ENCODE measurements at regions of chr15 and their contacts with region 1.

Region 1: GRCh38 chr15:89129123-89129815 is 41.0 kb downstream of the ABHD2 start:
- DNase-seq: no peak
- ATAC-seq: peak; percentile 95
- H3K4me3 ChIP-seq: no peak overlapping the region
- H3K27ac ChIP-seq: no peak overlapping the region
- H3K4me1 ChIP-seq: no peaks in the 10 kb centered on the region
- H3K27me3 ChIP-seq: no peaks in the 10 kb centered on the region
- CTCF ChIP-seq: peak; percentile 68 to 82 (median 81)
- EP300 ChIP-seq: no peak
- POLR2A ChIP-seq: no peak
- RAD21 ChIP-seq: peak; percentile 70

Region 2: DNA sequence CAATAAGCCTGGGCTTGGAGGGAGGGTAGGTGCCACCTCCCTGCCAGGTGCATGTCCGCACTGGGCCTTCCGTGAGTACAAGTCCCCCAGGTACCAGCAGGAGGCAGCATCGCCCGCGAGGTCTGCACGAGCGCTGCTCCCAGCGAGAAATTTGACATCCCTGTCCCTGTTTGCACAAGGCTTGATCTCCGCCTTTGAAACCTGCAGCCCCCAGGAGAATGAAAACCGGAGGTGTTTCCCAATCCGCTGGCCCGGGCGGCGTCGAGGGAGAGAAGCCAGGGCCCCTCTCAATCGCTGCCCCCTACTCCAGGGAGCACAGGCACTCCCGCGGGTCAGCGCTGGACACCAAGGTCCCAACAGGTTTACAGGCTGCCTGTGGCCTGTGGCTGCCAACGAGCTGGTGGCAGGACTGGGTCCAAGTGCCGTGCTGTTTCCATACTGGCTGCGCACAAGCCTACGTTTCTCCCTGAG is 234.9 kb before region 1 on chr15:
- CTCF ChIA-PET with region 1: no interaction called
- POLR2A ChIA-PET with region 1: no interaction called
- RAD21 ChIA-PET with region 1: no interaction called
- SMC1A ChIA-PET with region 1: no interaction called
- in situ Hi-C with region 1: no loop called
- intact Hi-C with region 1: loop called (anchors 1 kb)
- DNase-seq: no peak
- ATAC-seq: peak; percentile 75
- H3K4me3 ChIP-seq: peak overlapping the region; percentile 38; the same call in 1 of the 2 replicates
- H3K27ac ChIP-seq: no peak overlapping the region
- H3K4me1 ChIP-seq: peaks cover 3% of the 10 kb centered on the region
- H3K27me3 ChIP-seq: peaks cover 0 to 5% of the 10 kb centered on the region in 2 experiments; a peak in 2 of 4 replicates
- CTCF ChIP-seq: peak; percentile 73 to 92 (median 82)
- EP300 ChIP-seq: no peak
- POLR2A ChIP-seq: no peak
- RAD21 ChIP-seq: peak; percentile 48

Region 3: GRCh38 chr15:89075846-89076245 is 53.4 kb before region 1 on chr15:
- CTCF ChIA-PET with region 1: interaction called, 11 read pairs
- POLR2A ChIA-PET with region 1: no interaction called
- RAD21 ChIA-PET with region 1: interaction called, 5 read pairs
- SMC1A ChIA-PET with region 1: interaction called, 3 read pairs
- in situ Hi-C with region 1: no loop called
- intact Hi-C with region 1: no loop called
- DNase-seq: no peak
- ATAC-seq: no peak
- H3K4me3 ChIP-seq: no peak overlapping the region
- H3K27ac ChIP-seq: no peak overlapping the region
- H3K4me1 ChIP-seq: no peaks in the 10 kb centered on the region
- H3K27me3 ChIP-seq: no peaks in the 10 kb centered on the region
- CTCF ChIP-seq: no peak
- EP300 ChIP-seq: no peak
- POLR2A ChIP-seq: no peak
- RAD21 ChIP-seq: no peak

Region 4: GRCh38 chr15:89101302-89102191 is 27.7 kb before region 1 on chr15:
- CTCF ChIA-PET with region 1: interaction called, 22 read pairs
- POLR2A ChIA-PET with region 1: no interaction called
- RAD21 ChIA-PET with region 1: interaction called, 20 read pairs
- SMC1A ChIA-PET with region 1: interaction called, 45 read pairs
- in situ Hi-C with region 1: no loop called
- intact Hi-C with region 1: no loop called
- DNase-seq: no peak
- ATAC-seq: peak; percentile 81
- H3K4me3 ChIP-seq: no peak overlapping the region
- H3K27ac ChIP-seq: peak overlapping the region; percentile 10; the same call in 1 of the 2 replicates
- H3K4me1 ChIP-seq: peaks cover 9% of the 10 kb centered on the region; the same call in 1 of the 2 replicates
- H3K27me3 ChIP-seq: no peaks in the 10 kb centered on the region
- CTCF ChIP-seq: no peak
- EP300 ChIP-seq: no peak
- POLR2A ChIP-seq: no peak
- RAD21 ChIP-seq: no peak

Region 5: GRCh38 chr15:89150762-89151664 is 21.7 kb after region 1 on chr15:
- CTCF ChIA-PET with region 1: interaction called, 21 read pairs
- POLR2A ChIA-PET with region 1: interaction called, 5 read pairs
- RAD21 ChIA-PET with region 1: interaction called, 4 read pairs
- SMC1A ChIA-PET with region 1: interaction called, 4 read pairs
- in situ Hi-C with region 1: no loop called
- intact Hi-C with region 1: no loop called
- DNase-seq: no peak
- ATAC-seq: no peak
- H3K4me3 ChIP-seq: no peak overlapping the region
- H3K27ac ChIP-seq: no peak overlapping the region
- H3K4me1 ChIP-seq: no peaks in the 10 kb centered on the region
- H3K27me3 ChIP-seq: no peaks in the 10 kb centered on the region
- CTCF ChIP-seq: no peak
- EP300 ChIP-seq: no peak
- POLR2A ChIP-seq: no peak
- RAD21 ChIP-seq: no peak

Region 6: DNA sequence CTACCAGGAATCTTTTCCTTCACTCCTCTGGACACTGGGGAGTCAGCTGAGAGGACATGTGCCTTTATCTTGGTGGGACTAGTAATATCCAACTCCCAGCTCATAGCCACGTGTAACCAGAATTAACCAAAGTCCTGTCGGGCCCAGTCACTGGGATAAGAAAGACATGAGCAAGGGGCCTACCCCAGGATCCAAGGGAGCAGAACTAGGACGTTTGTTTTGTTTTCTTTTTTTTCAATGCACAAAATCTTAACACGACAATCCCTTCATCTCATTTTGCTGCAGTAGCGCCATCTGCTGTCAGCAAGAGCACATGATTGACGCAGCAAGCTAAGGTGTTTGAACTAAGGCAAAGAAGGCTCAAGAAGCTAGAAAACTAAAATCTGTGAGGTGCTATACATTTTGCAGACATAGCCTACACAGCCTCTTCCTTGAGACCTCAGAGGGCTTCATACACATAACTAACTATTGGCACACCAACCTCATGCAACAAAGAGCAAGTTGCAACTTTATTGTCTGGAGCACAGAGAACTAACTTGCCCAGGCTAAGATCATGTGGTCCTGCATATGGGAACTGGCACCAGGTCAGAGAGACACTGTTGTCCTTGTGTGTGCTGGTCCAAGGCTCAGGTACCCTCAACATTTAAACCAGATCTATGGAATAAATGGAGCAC is 48.5 kb after region 1 on chr15:
- CTCF ChIA-PET with region 1: interaction called, 38 read pairs
- POLR2A ChIA-PET with region 1: no interaction called
- RAD21 ChIA-PET with region 1: interaction called, 18 read pairs
- SMC1A ChIA-PET with region 1: interaction called, 22 read pairs
- in situ Hi-C with region 1: no loop called
- intact Hi-C with region 1: no loop called
- DNase-seq: peak; percentile 15
- ATAC-seq: peak; percentile 76
- H3K4me3 ChIP-seq: no peak overlapping the region
- H3K27ac ChIP-seq: no peak overlapping the region
- H3K4me1 ChIP-seq: peaks cover 7% of the 10 kb centered on the region; the same call in 1 of the 2 replicates
- H3K27me3 ChIP-seq: no peaks in the 10 kb centered on the region
- CTCF ChIP-seq: peak; percentile 76 to 92 (median 87); a peak in 5 of 6 replicates
- EP300 ChIP-seq: no peak
- POLR2A ChIP-seq: no peak
- RAD21 ChIP-seq: peak; percentile 88

Region 7: DNA sequence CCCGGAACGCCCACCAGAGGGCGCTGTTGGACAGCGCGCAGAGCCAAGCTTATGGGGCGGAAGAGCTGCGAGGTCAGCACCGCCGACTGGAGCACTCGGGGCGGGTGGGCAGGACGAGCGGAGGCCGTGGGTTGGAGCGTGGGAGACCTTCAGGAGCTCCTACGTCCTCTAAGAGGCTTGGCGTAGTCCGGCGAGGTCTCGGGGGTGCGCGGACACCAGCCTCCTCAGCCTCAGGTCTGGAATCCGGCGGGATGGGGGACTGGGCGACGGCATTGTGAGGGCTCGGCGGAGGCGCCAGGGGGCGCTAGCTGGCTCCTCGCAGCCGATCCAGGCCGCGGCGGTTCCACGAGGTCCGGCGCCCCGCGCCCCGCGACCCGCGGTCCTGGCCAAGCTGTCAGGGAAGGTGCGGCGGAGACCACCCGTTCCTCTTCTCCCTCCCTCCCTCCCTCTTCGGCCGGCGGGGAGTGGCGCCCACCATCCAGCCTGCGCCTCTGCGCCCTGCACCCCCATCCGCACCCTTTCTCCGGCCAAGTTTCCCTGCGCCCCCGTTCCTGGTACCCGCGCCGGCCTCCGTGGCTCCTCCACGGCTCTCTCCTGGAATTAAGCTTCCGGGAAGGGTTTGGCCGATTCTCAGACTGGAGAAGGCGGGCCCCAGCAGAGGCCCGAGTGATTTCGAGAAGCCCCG is 229.6 kb after region 1 on chr15:
- CTCF ChIA-PET with region 1: no interaction called
- POLR2A ChIA-PET with region 1: no interaction called
- RAD21 ChIA-PET with region 1: no interaction called
- SMC1A ChIA-PET with region 1: no interaction called
- in situ Hi-C with region 1: no loop called
- intact Hi-C with region 1: no loop called
- DNase-seq: peak; percentile 40
- ATAC-seq: peak; percentile 96
- H3K4me3 ChIP-seq: peak overlapping the region; percentile 67; the same call in 1 of the 2 replicates
- H3K27ac ChIP-seq: no peak overlapping the region
- H3K4me1 ChIP-seq: no peaks in the 10 kb centered on the region
- H3K27me3 ChIP-seq: peaks cover 12 to 35% of the 10 kb centered on the region in 2 experiments
- CTCF ChIP-seq: peak; percentile 82 to 93 (median 89)
- EP300 ChIP-seq: no peak
- POLR2A ChIP-seq: no peak
- RAD21 ChIP-seq: peak; percentile 89

Measured in GM12878 (cell line).